ENCODE measurements at regions of chr19 and their contacts with region 1.

Region 1: DNA sequence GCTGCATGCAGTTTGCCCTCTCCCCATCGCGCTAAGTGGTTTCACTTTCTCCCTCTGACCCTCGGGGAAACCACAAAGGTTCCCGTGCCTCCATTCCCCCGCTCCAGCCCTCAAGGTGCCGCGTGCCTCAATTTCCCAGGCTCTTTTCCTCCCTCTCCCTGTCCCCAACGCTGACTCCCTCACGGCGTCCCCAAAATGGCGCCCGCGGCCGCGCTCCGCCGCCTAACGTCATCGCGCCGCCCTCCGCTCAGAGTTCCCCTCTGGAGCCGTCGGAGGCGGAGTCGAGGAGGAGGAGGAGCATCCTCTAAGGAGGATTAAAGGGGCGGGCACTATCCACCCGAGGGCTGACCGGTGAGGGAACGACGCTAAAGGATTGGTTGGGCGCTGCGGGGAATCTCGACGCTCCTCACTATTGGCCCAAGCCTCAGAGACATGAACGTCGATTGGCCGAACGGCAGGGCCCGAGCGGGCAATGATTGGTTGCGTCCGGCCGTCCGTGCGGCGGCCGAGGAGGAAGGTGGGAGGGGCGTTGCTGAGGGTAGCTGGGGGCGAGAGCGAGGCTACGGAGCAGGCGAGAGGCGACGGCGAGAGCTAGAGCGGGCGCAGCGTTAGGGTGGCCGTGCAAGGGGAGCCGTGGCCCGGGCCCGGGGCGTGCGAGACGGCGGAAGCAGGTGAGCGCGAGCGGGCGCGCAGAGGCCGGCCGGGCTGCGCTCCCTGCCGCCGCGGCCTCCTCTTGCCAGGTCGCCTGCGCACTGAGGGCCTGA is at the start of gene ZNF574:
- DNase-seq: peak; percentile 99
- ATAC-seq: peak; percentile 99
- H3K4me3 Mint-ChIP-seq: peak within 1 kb of the TSS; percentile 89
- H3K27ac Mint-ChIP-seq: peak within 1 kb of the TSS; percentile 99
- H3K4me1 Mint-ChIP-seq: peaks cover 27% of the 10 kb centered on the region
- H3K27me3 Mint-ChIP-seq: no peaks in the 10 kb centered on the region
- total RNA-seq, gene ZNF574: 10.7 to 14.8 TPM

Region 2: DNA sequence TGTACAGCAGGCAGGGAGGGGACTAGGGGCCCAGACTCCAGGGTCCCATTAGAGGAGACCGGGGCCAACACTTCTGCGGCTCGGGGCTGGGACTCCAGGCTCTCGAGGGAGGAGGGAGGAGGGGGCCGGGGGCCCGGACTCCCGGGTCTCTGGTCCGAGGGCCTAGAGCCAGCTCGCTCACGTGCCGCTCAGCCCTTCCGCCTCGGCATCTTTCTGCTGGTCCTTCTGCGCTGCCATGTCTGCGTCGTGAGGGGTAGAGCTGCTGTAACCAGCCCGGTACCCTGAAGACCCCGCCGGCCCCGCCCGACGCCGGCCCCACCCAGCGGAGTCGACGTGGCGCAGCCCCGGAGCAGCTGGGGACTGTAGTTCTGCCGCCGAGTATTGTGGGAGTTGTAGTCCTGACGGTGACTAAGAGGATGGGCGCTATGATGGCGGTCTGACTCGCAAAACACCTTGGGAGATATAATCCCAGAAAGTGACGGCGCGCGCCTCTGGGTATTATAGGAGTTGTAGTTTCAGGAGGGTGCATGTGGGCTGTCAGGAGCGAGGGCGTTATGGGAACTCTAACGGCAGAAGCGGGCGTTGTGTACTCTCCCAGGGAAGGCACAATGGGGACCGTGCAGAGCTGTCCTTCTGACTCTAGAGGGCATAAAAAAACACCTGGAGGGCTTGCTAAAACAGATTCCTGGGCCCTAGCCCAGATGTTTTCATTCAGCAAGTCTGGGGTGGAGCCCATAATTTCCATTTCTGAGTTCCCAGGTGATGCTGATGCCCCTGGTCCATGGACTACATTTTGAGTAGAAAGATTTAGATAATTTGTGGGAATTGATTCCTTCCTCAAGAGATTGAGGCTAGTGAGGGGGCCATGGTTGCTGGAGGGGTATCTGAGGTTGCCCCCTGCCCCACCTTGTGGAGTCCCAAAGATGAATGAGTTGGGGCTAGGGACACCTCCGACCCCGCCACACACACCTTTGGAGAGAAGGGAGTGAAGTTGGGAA is 116.4 kb before region 1 on chr19 and contains the start of gene RABAC1:
- CTCF ChIA-PET with region 1: interaction called, 3 read pairs
- POLR2A ChIA-PET with region 1: no interaction called
- intact Hi-C with region 1: loop called in 1 of 2 experiments (anchors 1 kb)
- DNase-seq: peak; percentile 94
- ATAC-seq: peak; percentile 88
- H3K4me3 Mint-ChIP-seq: peak within 1 kb of the TSS; percentile 81
- H3K27ac Mint-ChIP-seq: peak within 1 kb of the TSS; percentile 87
- H3K4me1 Mint-ChIP-seq: peaks cover 16% of the 10 kb centered on the region
- H3K27me3 Mint-ChIP-seq: no peaks in the 10 kb centered on the region
- total RNA-seq, gene RABAC1: 35.3 to 49.7 TPM

Region 3: GRCh38 chr19:42121656-42122069 is 45.9 kb after region 1 on chr19:
- CTCF ChIA-PET with region 1: no interaction called
- POLR2A ChIA-PET with region 1: no interaction called
- intact Hi-C with region 1: loop called in 1 of 2 experiments (anchors 1 kb)
- DNase-seq: peak; percentile 93
- ATAC-seq: peak; percentile 81
- H3K4me3 Mint-ChIP-seq: peak overlapping the region; percentile 80
- H3K27ac Mint-ChIP-seq: peak overlapping the region; percentile 94
- H3K4me1 Mint-ChIP-seq: peaks cover 57% of the 10 kb centered on the region
- H3K27me3 Mint-ChIP-seq: no peaks in the 10 kb centered on the region

Region 4: GRCh38 chr19:42268704-42269477 is 193.1 kb after region 1 on chr19 and contains the start of gene CIC:
- CTCF ChIA-PET with region 1: no interaction called
- POLR2A ChIA-PET with region 1: no interaction called
- intact Hi-C with region 1: loop called in 1 of 2 experiments (anchors 1 kb)
- DNase-seq: peak; percentile 100
- ATAC-seq: peak; percentile 87
- H3K4me3 Mint-ChIP-seq: no peak within 1 kb of the TSS
- H3K27ac Mint-ChIP-seq: peak within 1 kb of the TSS; percentile 97
- H3K4me1 Mint-ChIP-seq: peaks cover 24% of the 10 kb centered on the region
- H3K27me3 Mint-ChIP-seq: no peaks in the 10 kb centered on the region
- total RNA-seq, gene CIC: 62.8 to 66.3 TPM

Region 5: GRCh38 chr19:42301656-42302203 is 225.9 kb after region 1 on chr19 and contains the start of gene PRR19:
- CTCF ChIA-PET with region 1: interaction called, 3 read pairs
- POLR2A ChIA-PET with region 1: interaction called, 4 read pairs
- intact Hi-C with region 1: loop called in 1 of 2 experiments (anchors 1 kb)
- DNase-seq: peak; percentile 50
- ATAC-seq: peak; percentile 25
- H3K4me3 Mint-ChIP-seq: peak within 1 kb of the TSS; percentile 83
- H3K27ac Mint-ChIP-seq: peak within 1 kb of the TSS; percentile 85
- H3K4me1 Mint-ChIP-seq: peaks cover 19% of the 10 kb centered on the region
- H3K27me3 Mint-ChIP-seq: no peaks in the 10 kb centered on the region
- total RNA-seq, gene PRR19: 0.63 to 1.0 TPM

Region 6: GRCh38 chr19:42396381-42397262 is 320.8 kb after region 1 on chr19:
- CTCF ChIA-PET with region 1: no interaction called
- POLR2A ChIA-PET with region 1: interaction called, 3 read pairs
- intact Hi-C with region 1: loop called in 1 of 2 experiments (anchors 1 kb)
- DNase-seq: peak; percentile 97
- ATAC-seq: peak; percentile 99
- H3K4me3 Mint-ChIP-seq: peak overlapping the region; percentile 88
- H3K27ac Mint-ChIP-seq: peak overlapping the region; percentile 90
- H3K4me1 Mint-ChIP-seq: peaks cover 18% of the 10 kb centered on the region
- H3K27me3 Mint-ChIP-seq: peaks cover 2% of the 10 kb centered on the region

Region 7: GRCh38 chr19:43765109-43765876 is 1689.5 kb after region 1 on chr19:
- CTCF ChIA-PET with region 1: no interaction called
- POLR2A ChIA-PET with region 1: no interaction called
- intact Hi-C with region 1: loop called in 1 of 2 experiments (anchors 5 kb)
- DNase-seq: peak; percentile 92
- ATAC-seq: peak; percentile 81
- H3K4me3 Mint-ChIP-seq: peak overlapping the region; percentile 47
- H3K27ac Mint-ChIP-seq: peak overlapping the region; percentile 97
- H3K4me1 Mint-ChIP-seq: peaks cover 71% of the 10 kb centered on the region
- H3K27me3 Mint-ChIP-seq: no peaks in the 10 kb centered on the region